ACHN (cell line): ENCODE measurements at regions of chr3 and their contacts with region 1.

Region 1: DNA sequence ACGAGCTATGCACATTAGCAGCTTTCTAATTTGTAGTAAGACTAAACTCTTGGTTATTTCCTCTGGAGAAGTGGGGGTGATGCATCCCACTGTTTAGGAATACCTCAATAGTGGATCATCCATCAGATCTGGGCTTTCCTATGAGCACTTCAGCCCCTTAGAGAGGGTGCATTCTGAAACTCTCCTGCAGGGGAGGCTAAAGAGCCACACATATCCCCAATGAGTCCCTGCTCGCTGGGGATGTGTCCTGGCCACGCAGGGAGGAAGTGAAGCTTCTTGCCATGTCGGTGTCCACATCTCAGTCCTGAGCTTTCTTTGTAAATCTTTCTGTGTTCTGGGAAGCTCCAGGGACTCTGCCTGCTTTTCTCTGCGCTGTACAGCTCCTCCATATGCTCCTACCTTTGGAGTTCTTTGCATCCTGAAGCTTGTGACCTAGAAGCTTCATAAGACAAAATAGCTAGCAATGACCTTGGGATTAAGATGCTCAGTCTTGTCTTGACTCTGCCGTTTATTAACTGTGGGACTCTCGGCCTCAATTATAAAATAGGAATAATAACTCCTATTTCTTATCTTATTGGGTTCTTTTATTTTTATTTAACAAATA is 28.3 kb upstream of the MASP1 start:
- DNase-seq: peak; percentile 41

Region 2: DNA sequence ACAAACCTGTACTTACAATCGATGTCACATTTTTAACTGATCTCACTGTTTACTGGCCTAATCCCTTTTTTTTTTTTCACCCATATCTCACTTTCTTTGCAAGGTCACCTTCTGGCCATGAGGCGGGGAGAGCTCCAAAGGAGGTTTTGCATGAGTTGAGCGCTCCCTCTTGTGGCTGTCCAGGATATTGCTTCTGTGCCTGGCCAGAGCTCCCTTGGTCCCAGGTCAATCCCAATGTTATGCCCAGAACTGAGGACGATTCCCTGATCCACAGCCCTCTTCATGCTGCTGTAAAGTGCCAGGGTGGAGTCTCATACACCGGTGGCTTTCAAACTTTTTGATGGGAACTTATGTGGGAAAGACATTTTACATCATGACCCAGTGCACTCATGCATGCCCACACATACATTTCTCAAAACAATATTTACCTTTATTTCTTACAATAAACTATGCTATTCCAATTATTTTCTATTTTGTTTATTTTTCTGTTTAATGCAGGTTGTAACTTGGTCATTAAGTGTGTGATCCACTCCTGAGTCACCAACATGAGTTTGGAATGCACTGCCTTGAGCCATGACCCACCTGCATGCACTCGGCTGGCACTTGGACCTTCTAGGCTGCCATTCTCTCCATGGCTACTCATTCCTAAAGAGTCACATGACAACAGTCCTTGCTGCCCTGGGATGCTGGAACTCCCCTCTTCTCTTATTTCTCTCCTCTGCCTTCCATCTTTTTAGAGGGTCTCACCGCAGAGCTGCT is 360.0 kb after region 1 on chr3:
- in situ Hi-C with region 1: loop called (anchors 25 kb)
- DNase-seq: peak; percentile 67